ENCODE measurements at regions of chr19 and their contacts with region 1.

Region 1: DNA sequence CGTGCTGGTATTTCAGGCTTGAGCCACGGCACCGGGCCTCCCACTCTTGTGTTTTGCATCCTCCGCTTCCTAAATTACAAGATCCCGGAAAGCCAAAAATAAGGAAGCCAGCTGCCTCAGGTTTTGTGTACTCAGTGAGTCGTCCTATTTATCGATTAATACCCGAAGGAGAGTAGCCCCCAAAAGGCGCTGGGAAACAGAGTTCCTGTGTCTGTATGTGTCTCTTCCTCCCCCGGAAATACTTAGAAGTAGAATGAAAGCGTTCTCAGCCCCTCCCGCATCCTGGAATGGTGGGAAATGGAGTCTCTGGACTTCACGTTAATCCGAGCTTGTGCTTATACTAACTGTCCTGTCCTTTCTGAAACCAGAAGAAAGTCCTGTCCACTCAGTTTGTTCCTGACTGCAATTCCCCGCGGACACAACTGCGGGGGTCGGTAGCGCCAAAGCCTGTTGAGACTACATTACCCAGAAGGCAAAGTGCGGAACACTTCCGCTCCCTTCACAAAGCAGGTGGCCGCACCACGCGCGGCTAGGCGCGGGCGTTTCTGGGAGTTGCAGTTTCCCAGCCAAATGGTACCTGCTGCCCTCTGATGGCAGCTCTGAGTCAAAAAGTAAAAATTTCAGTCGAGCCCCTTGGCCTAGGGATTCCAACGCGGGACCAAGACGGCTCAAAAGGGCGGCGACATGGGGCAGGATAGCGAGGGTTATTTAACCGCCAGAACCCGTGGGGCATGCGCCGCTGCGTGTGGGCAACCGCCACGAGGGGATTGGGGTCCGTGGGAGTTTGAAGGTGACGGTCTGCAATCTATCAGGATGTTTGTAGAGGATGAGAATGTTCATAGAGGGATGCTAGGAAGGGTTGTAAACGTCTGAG is 2.2 kb upstream of the GSK3A start:
- DNase-seq: peak; percentile 93
- ATAC-seq: peak; percentile 38
- H3K4me3 ChIP-seq: peak overlapping the region; percentile 55
- H3K27ac ChIP-seq: peak overlapping the region; percentile 89
- H3K4me1 ChIP-seq: peaks cover 8% of the 10 kb centered on the region
- H3K27me3 ChIP-seq: no peaks in the 10 kb centered on the region
- CTCF ChIP-seq: peak; percentile 75
- POLR2A ChIP-seq: 0 out of 2 replicates have a peak, but pooled peaks have one; percentile 35
- RAD21 ChIP-seq: peak; percentile 42; the same call in 1 of the 2 replicates

Region 2: GRCh38 chr19:42108527-42109389 is 135.8 kb before region 1 on chr19:
- CTCF ChIA-PET with region 1: interaction called, 3 read pairs
- POLR2A ChIA-PET with region 1: no interaction called
- dilution Hi-C with region 1: no loop called
- in situ Hi-C with region 1: no loop called
- intact Hi-C with region 1: loop called (anchors 5 kb)
- DNase-seq: peak; percentile 89
- ATAC-seq: peak; percentile 82
- H3K4me3 ChIP-seq: no peak overlapping the region
- H3K27ac ChIP-seq: no peak overlapping the region
- H3K4me1 ChIP-seq: peaks cover 19% of the 10 kb centered on the region
- H3K27me3 ChIP-seq: peaks cover 3% of the 10 kb centered on the region; the same call in 1 of the 2 replicates
- CTCF ChIP-seq: peak; percentile 100; the same call in 1 of the 2 replicates
- POLR2A ChIP-seq: peak; percentile 69
- RAD21 ChIP-seq: peak; percentile 100

Region 3: DNA sequence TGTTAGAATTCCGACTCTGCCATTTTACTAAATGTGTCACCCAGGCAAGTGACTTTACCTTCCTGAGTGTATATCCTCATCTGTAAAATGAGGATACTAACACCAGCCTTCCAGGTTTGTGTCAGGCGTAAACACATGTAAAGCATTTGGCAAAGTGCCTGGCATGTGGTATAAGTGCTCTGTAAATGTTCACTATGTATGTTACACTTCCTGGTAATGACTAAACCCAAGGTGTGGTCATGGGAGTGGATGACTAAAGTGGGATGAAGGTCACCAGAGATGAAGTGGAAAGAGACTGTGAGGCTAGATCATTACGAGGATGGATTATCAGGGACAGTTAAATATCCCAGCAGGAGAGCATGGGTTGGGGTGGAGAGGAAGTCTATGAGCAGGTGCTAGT is 52.7 kb before region 1 on chr19:
- CTCF ChIA-PET with region 1: no interaction called
- POLR2A ChIA-PET with region 1: no interaction called
- dilution Hi-C with region 1: no loop called
- in situ Hi-C with region 1: no loop called
- intact Hi-C with region 1: no loop called
- DNase-seq: peak; percentile 84
- ATAC-seq: no peak
- H3K4me3 ChIP-seq: no peak overlapping the region
- H3K27ac ChIP-seq: no peak overlapping the region
- H3K4me1 ChIP-seq: peaks cover 2% of the 10 kb centered on the region; the same call in 1 of the 2 replicates
- H3K27me3 ChIP-seq: no peaks in the 10 kb centered on the region
- CTCF ChIP-seq: no peak
- POLR2A ChIP-seq: no peak
- RAD21 ChIP-seq: no peak

Region 4: GRCh38 chr19:42219812-42220750 is 24.5 kb before region 1 on chr19 and contains the start of gene ZNF526:
- CTCF ChIA-PET with region 1: interaction called, 3 read pairs
- POLR2A ChIA-PET with region 1: no interaction called
- dilution Hi-C with region 1: no loop called
- in situ Hi-C with region 1: no loop called
- intact Hi-C with region 1: loop called (anchors 2 kb)
- DNase-seq: peak; percentile 97
- ATAC-seq: peak; percentile 86
- H3K4me3 ChIP-seq: peak within 1 kb of the TSS; percentile 70
- H3K27ac ChIP-seq: peak within 1 kb of the TSS; percentile 82
- H3K4me1 ChIP-seq: peaks cover 11% of the 10 kb centered on the region
- H3K27me3 ChIP-seq: no peaks in the 10 kb centered on the region
- CTCF ChIP-seq: peak; percentile 10; the same call in 1 of the 2 replicates
- POLR2A ChIP-seq: peak; percentile 88
- RAD21 ChIP-seq: peak; percentile 11
- total RNA-seq, gene ZNF526: 13.6 and 14.2 TPM in 2 replicates

Region 5: DNA sequence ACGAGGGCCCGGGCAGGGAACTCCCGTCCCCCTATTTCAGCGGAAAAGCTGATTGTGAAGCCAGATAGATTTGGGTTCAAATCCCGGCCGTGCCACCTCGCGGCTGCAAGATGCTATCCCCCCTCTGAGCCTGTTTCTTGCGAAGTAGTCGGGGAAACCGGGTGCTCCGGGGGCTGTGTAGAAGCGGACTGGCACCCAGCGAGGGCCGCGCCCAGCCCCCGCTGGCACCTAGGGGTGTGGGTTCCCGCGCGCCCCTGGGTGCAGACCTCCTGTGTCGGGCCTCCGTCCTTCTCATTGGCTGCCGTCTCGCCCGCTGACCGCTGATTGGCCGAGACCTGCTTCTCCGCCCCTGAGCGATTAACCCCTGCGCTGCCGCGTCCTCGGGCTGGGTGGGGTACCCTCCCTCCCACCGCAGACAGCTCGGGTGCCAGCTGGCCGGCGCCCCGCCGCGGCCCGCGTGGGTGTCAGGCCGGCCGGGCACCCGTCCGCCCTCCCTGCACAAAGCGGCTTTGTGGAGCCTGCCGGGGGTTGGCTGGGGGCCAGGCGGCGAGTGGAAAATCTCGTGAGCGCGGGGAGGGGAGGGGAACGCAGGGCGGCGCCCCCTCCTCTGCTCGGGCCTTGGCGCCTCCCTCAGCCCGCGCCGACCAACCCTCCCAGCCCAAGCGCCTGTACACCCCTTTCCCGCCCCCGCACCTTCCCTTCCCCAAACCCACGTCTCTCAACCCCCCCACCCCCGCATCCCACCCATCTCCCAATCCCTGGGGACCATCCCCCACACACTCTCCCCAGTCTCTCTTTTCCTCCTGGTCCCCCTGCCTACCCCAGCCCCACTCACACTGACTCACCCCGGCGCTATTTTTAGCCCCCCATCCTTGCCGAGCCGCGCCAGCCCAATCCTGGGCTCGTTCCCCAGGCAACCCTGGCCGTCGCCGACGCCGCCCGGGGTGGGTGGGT is 35.9 kb after region 1 on chr19:
- CTCF ChIA-PET with region 1: interaction called, 29 read pairs
- POLR2A ChIA-PET with region 1: interaction called, 6 read pairs
- dilution Hi-C with region 1: no loop called
- in situ Hi-C with region 1: no loop called
- intact Hi-C with region 1: loop called (anchors 1 kb)
- DNase-seq: peak; percentile 83
- ATAC-seq: peak; percentile 47
- H3K4me3 ChIP-seq: peak overlapping the region; percentile 65
- H3K27ac ChIP-seq: peak overlapping the region; percentile 93
- H3K4me1 ChIP-seq: peaks cover 51% of the 10 kb centered on the region
- H3K27me3 ChIP-seq: no peaks in the 10 kb centered on the region
- CTCF ChIP-seq: no peak
- POLR2A ChIP-seq: 0 out of 2 replicates have a peak, but pooled peaks have one; percentile 24
- RAD21 ChIP-seq: no peak

Region 6: GRCh38 chr19:42286349-42287261 is 42.0 kb after region 1 on chr19:
- CTCF ChIA-PET with region 1: interaction called, 3 read pairs
- POLR2A ChIA-PET with region 1: interaction called, 10 read pairs
- dilution Hi-C with region 1: no loop called
- in situ Hi-C with region 1: no loop called
- intact Hi-C with region 1: no loop called
- DNase-seq: peak; percentile 27
- ATAC-seq: no peak
- H3K4me3 ChIP-seq: no peak overlapping the region
- H3K27ac ChIP-seq: 0 out of 2 replicates have a peak overlapping the region, but pooled peaks have one; percentile 3
- H3K4me1 ChIP-seq: peaks cover 33% of the 10 kb centered on the region
- H3K27me3 ChIP-seq: no peaks in the 10 kb centered on the region
- CTCF ChIP-seq: no peak
- POLR2A ChIP-seq: no peak
- RAD21 ChIP-seq: no peak

Region 7: DNA sequence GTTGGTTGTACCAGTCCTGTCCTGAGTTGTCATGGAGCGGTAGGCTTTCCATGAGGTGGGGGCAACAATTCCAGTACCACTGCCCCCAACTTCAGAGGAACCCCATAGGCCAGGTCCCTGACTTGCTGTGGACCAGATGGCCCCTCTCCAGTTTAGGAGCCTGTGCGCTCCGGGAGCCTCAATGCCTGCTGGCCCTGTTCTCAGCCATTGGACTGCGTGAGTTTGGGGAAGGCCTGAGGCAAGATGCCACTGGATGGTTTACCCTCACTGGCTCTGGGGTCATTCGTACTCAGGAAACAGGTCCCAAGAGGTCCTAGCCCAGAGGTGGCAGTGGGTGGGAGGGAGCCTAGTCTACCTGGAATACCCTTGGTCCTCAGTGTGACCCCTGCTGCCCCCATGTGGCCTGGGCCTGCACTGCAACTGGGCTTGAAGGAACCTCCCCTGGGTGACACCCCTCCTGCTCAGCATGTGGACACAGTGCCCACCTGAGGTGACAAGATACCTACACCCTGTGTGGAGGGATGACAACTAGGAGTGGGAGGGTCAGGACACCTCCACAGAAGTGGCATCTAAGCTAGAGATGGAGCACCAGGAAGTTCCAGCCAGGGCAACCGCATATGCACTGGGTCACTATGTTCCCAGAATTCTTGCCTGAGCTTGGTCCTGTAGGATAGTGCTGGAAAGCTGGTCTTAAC is 51.4 kb after region 1 on chr19:
- CTCF ChIA-PET with region 1: interaction called, 4 read pairs
- POLR2A ChIA-PET with region 1: interaction called, 3 read pairs
- dilution Hi-C with region 1: no loop called
- in situ Hi-C with region 1: no loop called
- intact Hi-C with region 1: loop called (anchors 1 kb)
- DNase-seq: peak; percentile 41
- ATAC-seq: peak; percentile 96
- H3K4me3 ChIP-seq: no peak overlapping the region
- H3K27ac ChIP-seq: no peak overlapping the region
- H3K4me1 ChIP-seq: no peaks in the 10 kb centered on the region
- H3K27me3 ChIP-seq: no peaks in the 10 kb centered on the region
- CTCF ChIP-seq: peak; percentile 80
- POLR2A ChIP-seq: no peak
- RAD21 ChIP-seq: peak; percentile 75

Region 8: GRCh38 chr19:42325273-42325895 is 80.8 kb after region 1 on chr19 and contains the start of gene MEGF8:
- CTCF ChIA-PET with region 1: no interaction called
- POLR2A ChIA-PET with region 1: no interaction called
- dilution Hi-C with region 1: no loop called
- in situ Hi-C with region 1: no loop called
- intact Hi-C with region 1: loop called (anchors 1 kb)
- DNase-seq: peak; percentile 99
- ATAC-seq: peak; percentile 98
- H3K4me3 ChIP-seq: peak within 1 kb of the TSS; percentile 78
- H3K27ac ChIP-seq: peak within 1 kb of the TSS; percentile 30
- H3K4me1 ChIP-seq: peaks cover 4% of the 10 kb centered on the region
- H3K27me3 ChIP-seq: peaks cover 26% of the 10 kb centered on the region
- CTCF ChIP-seq: peak; percentile 96
- POLR2A ChIP-seq: peak; percentile 72
- RAD21 ChIP-seq: peak; percentile 78
- total RNA-seq, gene MEGF8: 2.3 and 2.5 TPM in 2 replicates

Region 9: GRCh38 chr19:42468273-42468796 is 223.8 kb after region 1 on chr19:
- CTCF ChIA-PET with region 1: no interaction called
- POLR2A ChIA-PET with region 1: no interaction called
- dilution Hi-C with region 1: no loop called
- in situ Hi-C with region 1: no loop called
- intact Hi-C with region 1: no loop called
- DNase-seq: peak; percentile 62
- ATAC-seq: peak; percentile 93
- H3K4me3 ChIP-seq: no peak overlapping the region
- H3K27ac ChIP-seq: no peak overlapping the region
- H3K4me1 ChIP-seq: peaks cover 6% of the 10 kb centered on the region; the same call in 1 of the 2 replicates
- H3K27me3 ChIP-seq: peaks cover 15% of the 10 kb centered on the region
- CTCF ChIP-seq: no peak
- POLR2A ChIP-seq: no peak
- RAD21 ChIP-seq: no peak

Measured in IMR-90 (cell line).